ENCODE measurements at regions of chr9 and their contacts with region 1.

Region 1: GRCh38 chr9:21873540-21874221 is 71.2 kb downstream of the MTAP start:
- DNase-seq: no peak
- H3K4me3 ChIP-seq: no peak overlapping the region
- H3K4me3 Mint-ChIP-seq: no peak overlapping the region
- H3K27ac Mint-ChIP-seq: no peak overlapping the region
- H3K4me1 ChIP-seq: no peaks in the 10 kb centered on the region; the same call in 1 of the 2 replicates
- H3K4me1 Mint-ChIP-seq: no peaks in the 10 kb centered on the region
- H3K27me3 ChIP-seq: no peaks in the 10 kb centered on the region
- H3K27me3 Mint-ChIP-seq: no peaks in the 10 kb centered on the region
- CTCF ChIP-seq: no peak

Region 2: DNA sequence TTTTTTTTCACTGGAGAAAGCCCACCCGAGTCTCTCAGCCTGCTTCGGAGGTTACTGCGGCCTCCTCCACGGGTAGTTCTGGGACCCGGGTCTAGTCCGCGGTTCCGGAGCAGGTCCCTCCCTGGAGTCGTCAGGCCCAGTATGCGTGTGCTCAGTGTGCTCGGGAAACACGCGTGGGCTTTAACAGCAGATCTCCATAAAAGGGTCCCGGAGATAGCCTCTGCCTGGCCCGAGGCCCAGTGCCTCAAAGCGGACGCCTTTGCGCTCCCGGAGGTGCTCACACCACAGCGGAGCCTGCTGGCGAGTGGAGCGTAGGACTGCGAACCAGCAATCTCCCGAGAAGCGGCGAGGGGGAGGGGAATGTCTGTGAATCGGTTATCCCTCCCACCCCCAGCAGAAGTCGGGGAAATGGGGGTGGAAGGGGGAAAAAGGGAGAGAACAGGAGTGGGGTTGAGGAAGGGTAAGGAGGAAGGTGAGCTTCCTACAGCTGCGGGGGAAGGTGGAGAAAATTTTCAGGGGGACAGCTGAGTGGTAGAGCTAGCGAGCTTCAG is 91.8 kb after region 1 on chr9:
- CTCF ChIA-PET with region 1: no interaction called
- POLR2A ChIA-PET with region 1: no interaction called
- intact Hi-C with region 1: loop called (anchors 10 kb)
- DNase-seq: peak; percentile 77 to 79
- H3K4me3 ChIP-seq: peak overlapping the region; percentile 59
- H3K4me3 Mint-ChIP-seq: peak overlapping the region; percentile 66
- H3K27ac Mint-ChIP-seq: no peak overlapping the region
- H3K4me1 ChIP-seq: no peaks in the 10 kb centered on the region
- H3K4me1 Mint-ChIP-seq: no peaks in the 10 kb centered on the region
- H3K27me3 ChIP-seq: no peaks in the 10 kb centered on the region
- H3K27me3 Mint-ChIP-seq: no peaks in the 10 kb centered on the region
- CTCF ChIP-seq: peak; percentile 26 to 74